GM12878 (cell line): ENCODE measurements at regions of chr17 and their contacts with region 1.

Region 1: GRCh38 chr17:40803617-40804082 is 3.9 kb upstream of the KRT28 start:
- DNase-seq: no peak
- ATAC-seq: peak; percentile 97
- H3K4me3 ChIP-seq: no peak overlapping the region
- H3K27ac ChIP-seq: no peak overlapping the region
- H3K4me1 ChIP-seq: no peaks in the 10 kb centered on the region
- H3K27me3 ChIP-seq: peaks cover 7 to 10% of the 10 kb centered on the region in 2 experiments
- CTCF ChIP-seq: peak; percentile 84 to 90 (median 86)
- EP300 ChIP-seq: no peak
- POLR2A ChIP-seq: no peak
- RAD21 ChIP-seq: peak; percentile 91

Region 2: DNA sequence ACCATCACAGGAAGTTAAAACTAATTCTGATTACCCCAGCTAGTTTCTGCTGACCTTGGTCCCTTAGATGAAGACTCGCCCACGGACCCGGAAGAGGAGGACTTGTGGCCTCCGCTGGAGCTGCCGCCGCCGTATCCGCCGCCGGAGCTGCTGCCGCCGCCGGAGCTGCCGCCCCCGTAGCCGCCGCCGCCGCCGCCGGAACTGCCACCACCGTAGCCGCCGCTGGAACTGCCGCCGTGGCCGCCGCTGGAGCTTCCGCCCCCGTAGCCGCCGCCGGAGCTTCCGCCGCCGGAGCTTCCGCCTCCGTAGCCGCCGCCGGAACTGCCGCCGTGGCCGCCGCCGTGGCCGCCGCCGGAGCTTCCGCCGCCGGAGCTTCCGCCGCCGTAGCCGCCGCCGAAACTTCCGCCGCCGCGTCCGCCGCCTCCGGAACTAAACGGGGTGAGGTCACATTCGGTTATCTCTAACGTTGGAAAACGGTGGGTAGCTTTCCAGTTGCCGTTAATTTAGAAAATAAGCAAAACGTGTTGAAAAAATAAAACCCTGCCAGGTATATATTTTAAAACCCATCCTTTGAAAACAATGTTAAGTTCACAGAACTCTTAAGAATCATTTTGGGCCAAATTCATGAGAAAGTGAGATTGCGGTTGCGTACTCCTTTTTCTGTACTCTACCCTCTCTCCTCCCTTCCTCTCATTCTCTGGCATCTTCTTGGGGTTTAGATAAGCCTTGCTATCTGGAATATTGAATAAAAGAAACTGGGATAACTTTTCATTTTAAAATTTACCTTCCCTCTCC is 15.3 kb after region 1 on chr17:
- CTCF ChIA-PET with region 1: interaction called, 4 read pairs
- POLR2A ChIA-PET with region 1: no interaction called
- RAD21 ChIA-PET with region 1: interaction called, 6 read pairs
- SMC1A ChIA-PET with region 1: interaction called, 13 read pairs
- in situ Hi-C with region 1: no loop called
- intact Hi-C with region 1: no loop called
- DNase-seq: no peak
- ATAC-seq: peak; percentile 91
- H3K4me3 ChIP-seq: peak overlapping the region; percentile 78
- H3K27ac ChIP-seq: peak overlapping the region; percentile 76
- H3K4me1 ChIP-seq: peaks cover 12% of the 10 kb centered on the region
- H3K27me3 ChIP-seq: no peaks in the 10 kb centered on the region
- CTCF ChIP-seq: no peak
- EP300 ChIP-seq: no peak
- POLR2A ChIP-seq: peak; percentile 85
- RAD21 ChIP-seq: no peak

Region 3: DNA sequence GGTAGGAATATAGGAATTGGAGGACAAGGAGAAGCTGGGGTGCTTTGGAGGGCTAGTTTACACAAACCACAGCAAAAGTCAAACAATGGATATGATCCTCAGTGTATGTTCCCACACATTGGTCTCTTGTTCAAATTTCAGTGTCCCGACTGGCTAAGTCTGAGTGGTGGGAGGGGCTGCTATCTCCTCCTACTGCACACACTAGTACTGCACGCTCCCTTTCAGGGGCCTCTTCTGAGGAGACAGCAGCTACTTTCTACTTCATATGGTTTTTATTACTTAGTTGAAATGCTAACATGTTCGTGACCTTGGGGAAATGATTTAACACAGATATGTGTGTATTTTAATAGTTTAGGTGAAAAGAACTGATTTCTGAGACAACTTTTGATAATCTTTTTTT is 37.6 kb after region 1 on chr17:
- CTCF ChIA-PET with region 1: no interaction called
- POLR2A ChIA-PET with region 1: no interaction called
- RAD21 ChIA-PET with region 1: no interaction called
- SMC1A ChIA-PET with region 1: no interaction called
- in situ Hi-C with region 1: no loop called
- intact Hi-C with region 1: no loop called
- DNase-seq: no peak
- ATAC-seq: no peak
- H3K4me3 ChIP-seq: no peak overlapping the region
- H3K27ac ChIP-seq: no peak overlapping the region
- H3K4me1 ChIP-seq: no peaks in the 10 kb centered on the region
- H3K27me3 ChIP-seq: no peaks in the 10 kb centered on the region
- CTCF ChIP-seq: no peak
- EP300 ChIP-seq: no peak
- POLR2A ChIP-seq: no peak
- RAD21 ChIP-seq: no peak

Region 4: DNA sequence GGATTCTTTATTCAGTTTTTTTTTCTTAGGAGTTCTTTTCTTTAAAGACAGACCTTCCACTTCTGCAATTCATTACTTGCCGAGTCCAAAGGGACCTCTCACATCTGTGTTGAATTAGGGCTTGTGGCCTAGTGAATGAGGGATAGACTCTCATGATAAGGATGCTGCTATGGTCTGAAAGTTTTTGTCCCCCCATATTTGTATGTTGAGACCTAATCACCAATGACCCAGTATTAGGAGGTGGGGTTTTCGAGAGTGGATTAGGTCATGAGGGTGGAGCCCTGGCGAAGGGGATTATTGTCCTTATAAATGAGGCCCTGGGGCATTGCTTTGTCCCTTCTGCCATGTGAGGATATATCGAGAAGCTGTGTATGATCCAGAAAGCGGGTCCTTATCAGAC is 53.9 kb after region 1 on chr17:
- CTCF ChIA-PET with region 1: interaction called, 17 read pairs
- POLR2A ChIA-PET with region 1: no interaction called
- RAD21 ChIA-PET with region 1: no interaction called
- SMC1A ChIA-PET with region 1: no interaction called
- in situ Hi-C with region 1: no loop called
- intact Hi-C with region 1: loop called (anchors 5 kb)
- DNase-seq: no peak
- ATAC-seq: no peak
- H3K4me3 ChIP-seq: no peak overlapping the region
- H3K27ac ChIP-seq: no peak overlapping the region
- H3K4me1 ChIP-seq: no peaks in the 10 kb centered on the region
- H3K27me3 ChIP-seq: peaks cover 0 to 4% of the 10 kb centered on the region in 2 experiments; a peak in 3 of 4 replicates
- CTCF ChIP-seq: no peak
- EP300 ChIP-seq: no peak
- POLR2A ChIP-seq: no peak
- RAD21 ChIP-seq: no peak

Region 5: DNA sequence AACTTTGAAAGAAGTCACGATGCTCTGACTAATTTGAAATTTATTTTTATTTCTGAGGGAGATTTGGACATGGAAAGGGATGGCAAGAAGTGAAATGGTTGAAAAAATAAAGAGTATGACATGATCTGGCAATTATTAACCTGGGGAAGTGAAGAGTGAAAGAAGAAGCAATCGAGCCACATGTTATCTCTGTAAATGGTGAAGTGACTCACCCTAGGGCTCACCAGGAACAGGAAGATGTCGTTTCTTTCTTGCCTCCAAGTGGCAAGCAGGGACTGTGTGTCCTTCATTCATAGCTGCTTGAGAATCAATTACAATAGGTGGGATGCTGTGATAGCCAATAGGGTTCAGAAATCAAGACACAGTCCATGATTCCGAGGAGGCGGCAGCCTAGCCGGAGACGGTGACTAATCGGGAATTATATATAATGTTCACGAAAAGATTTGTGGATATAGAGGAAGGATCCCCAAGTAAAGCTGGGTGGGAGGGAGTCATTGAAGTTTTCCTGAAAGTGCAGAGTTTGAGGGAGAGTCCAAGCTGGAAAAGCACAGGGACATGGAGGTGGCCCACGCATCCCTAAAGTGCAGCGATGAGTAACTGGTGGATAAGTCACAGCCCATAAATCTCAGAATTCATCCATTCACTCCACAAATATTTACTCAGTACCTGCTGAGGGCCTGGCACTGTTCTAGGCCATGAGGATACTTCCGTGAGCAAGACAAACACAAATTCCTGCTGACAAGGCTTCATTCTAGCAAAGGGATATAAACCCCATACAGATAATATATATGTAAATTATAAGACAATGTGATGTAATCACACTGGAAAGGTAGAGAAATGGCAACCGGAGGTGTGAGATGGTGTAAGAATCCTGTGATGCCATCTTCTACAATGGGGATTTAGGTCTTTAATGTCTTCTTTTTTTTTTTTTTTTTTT is 99.7 kb after region 1 on chr17:
- CTCF ChIA-PET with region 1: no interaction called
- POLR2A ChIA-PET with region 1: no interaction called
- RAD21 ChIA-PET with region 1: no interaction called
- SMC1A ChIA-PET with region 1: no interaction called
- in situ Hi-C with region 1: no loop called
- intact Hi-C with region 1: loop called (anchors 1 kb)
- DNase-seq: no peak
- ATAC-seq: peak; percentile 89
- H3K4me3 ChIP-seq: no peak overlapping the region
- H3K27ac ChIP-seq: no peak overlapping the region
- H3K4me1 ChIP-seq: no peaks in the 10 kb centered on the region
- H3K27me3 ChIP-seq: no peaks in the 10 kb centered on the region; a peak in 2 of 4 replicates
- CTCF ChIP-seq: no peak
- EP300 ChIP-seq: 0 out of 4 replicates have a peak, but pooled peaks of 1 of the 2 experiments have one; percentile 28
- POLR2A ChIP-seq: no peak
- RAD21 ChIP-seq: no peak